Caco-2 (cell line): ENCODE measurements at regions of chr6 and their contacts with region 1.

Region 1: DNA sequence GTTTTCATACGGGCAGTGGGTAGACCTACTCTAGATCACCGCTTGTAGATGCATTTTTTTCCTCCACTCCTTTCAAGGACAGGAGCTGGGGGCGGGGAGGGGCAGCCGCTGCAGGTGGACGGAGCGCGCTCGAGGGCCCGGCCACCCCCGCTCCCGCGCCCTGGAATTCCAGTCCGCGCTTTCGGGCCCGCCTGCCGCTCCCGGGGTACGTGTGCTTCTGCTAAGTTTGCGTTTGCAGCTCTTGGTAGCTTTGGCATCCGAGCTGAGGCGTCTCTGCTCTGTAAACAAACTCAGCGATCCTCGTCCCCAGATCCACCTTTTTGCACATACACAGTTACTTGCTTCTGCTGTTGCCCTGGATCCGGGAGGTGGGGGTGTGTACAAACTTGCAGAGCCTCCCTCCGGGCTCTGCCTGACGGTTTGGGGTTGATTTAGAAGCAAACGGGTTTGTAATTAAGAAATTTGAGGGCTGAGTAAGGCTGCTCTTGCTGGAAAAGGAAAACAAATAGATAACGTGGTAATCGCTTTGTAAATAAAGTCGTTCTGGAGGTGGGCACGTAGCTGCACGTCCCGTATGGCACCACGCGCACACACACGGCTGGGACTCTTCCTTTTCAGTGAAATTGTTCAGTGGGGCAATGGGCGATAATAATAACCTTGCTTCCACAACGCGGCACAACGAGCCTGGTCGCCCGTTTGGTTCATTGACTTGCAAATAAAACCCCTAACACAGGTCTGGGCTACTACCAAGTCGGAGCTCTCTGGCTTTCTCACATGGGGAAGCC is 976 bp upstream of the CITED2 start:
- DNase-seq: peak; percentile 95 to 96
- H3K4me3 ChIP-seq: peak overlapping the region; percentile 90
- H3K4me3 Mint-ChIP-seq: peak overlapping the region; percentile 99
- H3K27ac Mint-ChIP-seq: peak overlapping the region; percentile 95
- H3K4me1 ChIP-seq: peaks cover 50% of the 10 kb centered on the region
- H3K4me1 Mint-ChIP-seq: peaks cover 41% of the 10 kb centered on the region
- H3K27me3 ChIP-seq: no peaks in the 10 kb centered on the region
- H3K27me3 Mint-ChIP-seq: no peaks in the 10 kb centered on the region
- CTCF ChIP-seq: no peak

Region 2: GRCh38 chr6:139533573-139534471 is 158.4 kb after region 1 on chr6:
- CTCF ChIA-PET with region 1: no interaction called
- POLR2A ChIA-PET with region 1: interaction called, 10 read pairs
- intact Hi-C with region 1: loop called (anchors 1 kb)
- DNase-seq: peak; percentile 28 to 50
- H3K4me3 ChIP-seq: peak overlapping the region; percentile 3; the same call in 1 of the 2 replicates
- H3K4me3 Mint-ChIP-seq: peak overlapping the region; percentile 67
- H3K27ac Mint-ChIP-seq: peak overlapping the region; percentile 90
- H3K4me1 ChIP-seq: peaks cover 54% of the 10 kb centered on the region
- H3K4me1 Mint-ChIP-seq: peaks cover 36% of the 10 kb centered on the region
- H3K27me3 ChIP-seq: no peaks in the 10 kb centered on the region
- H3K27me3 Mint-ChIP-seq: no peaks in the 10 kb centered on the region
- CTCF ChIP-seq: no peak

Region 3: DNA sequence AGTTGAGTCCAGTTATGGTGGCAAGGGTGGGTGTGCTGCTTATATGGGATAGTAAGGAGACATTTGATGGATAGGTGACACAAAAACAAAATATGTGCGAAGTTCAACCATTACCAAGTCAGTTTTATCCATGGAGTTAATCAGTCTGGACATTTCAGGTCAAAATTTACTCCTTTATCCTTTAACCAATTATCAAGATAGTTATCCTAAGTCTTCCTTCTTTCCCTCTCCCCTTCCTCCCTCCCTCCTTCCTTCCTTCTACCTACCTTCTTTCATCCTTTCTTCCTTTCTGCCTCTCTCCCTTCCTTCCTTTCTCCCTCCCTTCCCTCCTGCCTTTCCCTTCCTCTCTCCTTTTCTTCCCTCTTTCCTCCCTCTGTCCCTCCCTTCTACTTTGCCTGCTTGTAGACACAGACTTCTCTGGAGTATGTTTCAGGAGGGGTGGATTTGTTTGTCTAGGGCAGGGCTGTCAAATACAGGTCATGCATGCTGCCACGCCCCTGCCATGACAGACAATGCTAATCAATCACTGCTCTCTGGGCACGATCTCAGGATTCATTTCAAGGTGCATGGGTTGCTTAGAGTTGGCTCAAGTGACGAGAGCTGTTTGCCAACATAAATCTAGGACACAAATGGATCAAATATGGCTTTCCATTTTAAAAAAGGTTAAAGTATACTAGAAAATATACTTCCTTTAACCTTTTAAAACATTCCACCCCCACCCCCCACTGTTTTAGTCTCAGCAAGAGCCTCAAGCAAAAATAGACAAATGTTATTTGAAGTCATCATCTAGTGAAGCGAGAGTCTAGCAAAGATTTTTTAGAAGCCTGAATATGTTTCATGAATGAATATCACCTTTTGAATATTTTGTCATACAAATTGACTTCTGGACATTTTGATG is 280.6 kb after region 1 on chr6:
- CTCF ChIA-PET with region 1: interaction called, 4 read pairs
- POLR2A ChIA-PET with region 1: interaction called, 9 read pairs
- intact Hi-C with region 1: loop called (anchors 1 kb)
- DNase-seq: peak; percentile 81 to 90
- H3K4me3 ChIP-seq: no peak overlapping the region
- H3K4me3 Mint-ChIP-seq: peak overlapping the region; percentile 60
- H3K27ac Mint-ChIP-seq: peak overlapping the region; percentile 88
- H3K4me1 ChIP-seq: peaks cover 46% of the 10 kb centered on the region
- H3K4me1 Mint-ChIP-seq: peaks cover 33% of the 10 kb centered on the region
- H3K27me3 ChIP-seq: no peaks in the 10 kb centered on the region
- H3K27me3 Mint-ChIP-seq: no peaks in the 10 kb centered on the region
- CTCF ChIP-seq: no peak

Region 4: GRCh38 chr6:139846538-139847456 is 471.4 kb after region 1 on chr6:
- CTCF ChIA-PET with region 1: no interaction called
- POLR2A ChIA-PET with region 1: interaction called, 5 read pairs
- intact Hi-C with region 1: loop called (anchors 2 kb)
- DNase-seq: peak; percentile 62 to 65
- H3K4me3 ChIP-seq: no peak overlapping the region
- H3K4me3 Mint-ChIP-seq: peak overlapping the region; percentile 8
- H3K27ac Mint-ChIP-seq: peak overlapping the region; percentile 29
- H3K4me1 ChIP-seq: peaks cover 27% of the 10 kb centered on the region
- H3K4me1 Mint-ChIP-seq: peaks cover 20% of the 10 kb centered on the region
- H3K27me3 ChIP-seq: no peaks in the 10 kb centered on the region
- H3K27me3 Mint-ChIP-seq: no peaks in the 10 kb centered on the region
- CTCF ChIP-seq: no peak

Region 5: DNA sequence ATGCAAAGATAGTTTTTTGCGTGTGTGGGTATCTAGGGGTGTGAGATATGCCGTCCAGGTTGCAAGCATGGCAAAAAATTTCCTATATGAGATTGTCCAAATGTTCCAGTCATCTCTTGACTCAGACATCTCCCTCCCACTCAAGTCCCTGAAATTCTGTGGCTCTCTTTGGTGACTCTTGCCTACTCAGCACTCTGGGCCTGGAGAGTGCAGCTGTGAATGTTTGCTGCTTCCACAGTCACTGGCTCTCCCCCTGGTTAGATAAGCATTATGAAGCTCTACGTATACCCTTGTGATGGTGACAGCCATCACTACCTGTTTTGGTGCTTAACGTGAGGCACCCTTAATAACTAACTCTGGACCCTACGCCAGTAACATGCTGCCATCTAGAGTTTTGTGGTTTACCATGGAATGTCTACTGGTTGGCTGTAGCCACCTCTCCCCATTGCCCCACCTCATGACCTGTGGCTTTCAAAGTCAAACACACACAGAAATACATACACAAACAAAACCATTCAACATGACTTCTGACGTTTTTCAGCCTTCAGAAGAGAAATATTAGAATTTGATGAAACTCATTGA is 620.9 kb after region 1 on chr6:
- CTCF ChIA-PET with region 1: interaction called, 5 read pairs
- POLR2A ChIA-PET with region 1: no interaction called
- intact Hi-C with region 1: loop called (anchors 1 kb)
- DNase-seq: peak; percentile 64 to 71
- H3K4me3 ChIP-seq: no peak overlapping the region
- H3K4me3 Mint-ChIP-seq: no peak overlapping the region
- H3K27ac Mint-ChIP-seq: no peak overlapping the region
- H3K4me1 ChIP-seq: no peaks in the 10 kb centered on the region
- H3K4me1 Mint-ChIP-seq: peaks cover 6% of the 10 kb centered on the region
- H3K27me3 ChIP-seq: no peaks in the 10 kb centered on the region
- H3K27me3 Mint-ChIP-seq: no peaks in the 10 kb centered on the region
- CTCF ChIP-seq: peak; percentile 54 to 55